ENCODE measurements at regions of chr5 and their contacts with region 1.

Region 1: DNA sequence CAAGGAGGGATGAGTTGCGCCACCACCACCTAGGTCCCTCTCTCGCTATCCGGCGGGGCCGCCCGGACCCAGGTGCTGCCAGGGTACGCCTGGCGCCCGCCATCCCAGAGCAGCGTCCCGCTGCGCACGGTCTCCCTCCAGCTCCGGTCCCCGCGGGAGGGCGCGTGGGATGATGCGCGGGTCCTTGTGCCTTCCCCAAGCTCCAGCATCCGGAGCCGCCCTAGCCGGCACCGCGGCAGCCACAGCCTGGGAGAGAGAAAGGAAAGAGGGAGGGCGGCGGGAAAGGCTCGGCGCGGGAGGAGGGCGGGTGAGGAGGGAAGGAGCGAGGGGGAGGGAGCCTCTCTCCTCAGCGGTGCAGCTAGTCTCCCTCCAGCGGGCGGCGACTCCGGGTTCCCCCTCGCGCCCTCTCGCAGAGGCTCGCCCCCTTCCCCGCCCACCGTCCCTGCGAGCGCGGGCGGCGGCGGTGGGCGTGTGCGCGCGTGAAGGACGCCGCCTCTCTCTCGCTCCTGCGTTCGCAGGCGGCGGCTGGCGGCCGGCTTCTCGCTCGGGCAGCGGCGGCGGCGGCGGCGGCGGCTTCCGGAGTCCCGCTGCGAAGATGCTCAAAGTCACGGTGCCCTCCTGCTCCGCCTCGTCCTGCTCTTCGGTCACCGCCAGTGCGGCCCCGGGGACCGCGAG is at the start of gene CAMK4:
- DNase-seq: peak; percentile 86
- ATAC-seq: peak; percentile 88
- H3K4me3 Mint-ChIP-seq: peak within 1 kb of the TSS; percentile 98
- H3K27ac Mint-ChIP-seq: peak within 1 kb of the TSS; percentile 80
- H3K4me1 Mint-ChIP-seq: peaks cover 23% of the 10 kb centered on the region
- H3K27me3 Mint-ChIP-seq: no peaks in the 10 kb centered on the region
- total RNA-seq, gene CAMK4: 82.7 to 84.9 TPM

Region 2: GRCh38 chr5:111158105-111158744 is 65.8 kb before region 1 on chr5:
- CTCF ChIA-PET with region 1: interaction called, 22 read pairs
- POLR2A ChIA-PET with region 1: no interaction called
- DNase-seq: peak; percentile 86
- ATAC-seq: peak; percentile 72
- H3K4me3 Mint-ChIP-seq: no peak overlapping the region
- H3K27ac Mint-ChIP-seq: no peak overlapping the region
- H3K4me1 Mint-ChIP-seq: peaks cover 2% of the 10 kb centered on the region
- H3K27me3 Mint-ChIP-seq: no peaks in the 10 kb centered on the region

Region 3: DNA sequence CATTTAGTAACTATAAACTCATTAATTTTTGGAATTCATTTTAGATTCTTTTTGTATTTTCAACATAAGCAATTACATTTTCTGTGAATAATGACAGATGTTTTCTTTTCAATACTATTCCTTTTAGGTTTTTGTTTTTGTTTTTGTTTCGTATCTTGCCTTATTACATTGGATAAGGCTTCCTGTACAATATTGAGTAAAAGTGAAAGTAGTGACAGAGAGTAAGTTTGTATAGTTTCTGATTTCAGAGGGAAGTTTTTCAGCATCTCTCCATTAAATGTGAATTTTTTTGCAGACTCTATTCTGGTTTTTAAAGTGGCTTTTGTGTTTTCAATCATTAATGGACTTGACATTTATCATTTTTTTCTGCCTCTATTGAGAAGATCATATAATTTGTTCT is 12.7 kb before region 1 on chr5:
- CTCF ChIA-PET with region 1: interaction called, 11 read pairs
- POLR2A ChIA-PET with region 1: interaction called, 4 read pairs
- DNase-seq: no peak
- ATAC-seq: peak; percentile 65
- H3K4me3 Mint-ChIP-seq: peak overlapping the region; percentile 44
- H3K27ac Mint-ChIP-seq: peak overlapping the region; percentile 8
- H3K4me1 Mint-ChIP-seq: peaks cover 9% of the 10 kb centered on the region
- H3K27me3 Mint-ChIP-seq: no peaks in the 10 kb centered on the region

Region 4: GRCh38 chr5:111237470-111237869 is 13.4 kb after region 1 on chr5:
- CTCF ChIA-PET with region 1: interaction called, 85 read pairs
- POLR2A ChIA-PET with region 1: interaction called, 28 read pairs
- DNase-seq: no peak
- ATAC-seq: peak; percentile 17
- H3K4me3 Mint-ChIP-seq: peak overlapping the region; percentile 72
- H3K27ac Mint-ChIP-seq: peak overlapping the region; percentile 91
- H3K4me1 Mint-ChIP-seq: peaks cover 80% of the 10 kb centered on the region
- H3K27me3 Mint-ChIP-seq: no peaks in the 10 kb centered on the region

Region 5: DNA sequence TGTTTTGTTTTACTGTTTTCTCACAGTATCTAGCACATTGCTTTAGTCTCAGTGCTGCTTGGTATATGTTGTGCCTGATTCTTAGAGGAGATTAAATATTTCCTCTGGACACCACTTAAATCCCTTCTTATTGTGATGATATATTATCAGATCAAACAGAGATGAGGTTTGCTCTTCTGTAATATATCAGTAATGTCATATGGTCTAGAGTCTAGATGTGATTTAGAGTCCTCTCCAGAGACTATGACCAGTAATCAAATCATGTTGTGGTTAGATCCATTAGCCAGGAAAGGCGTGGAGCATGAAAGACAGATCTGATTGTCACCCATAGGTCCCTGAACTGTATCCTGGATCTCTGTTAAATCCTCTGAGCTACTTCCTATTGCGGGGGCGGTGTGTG is 24.5 kb after region 1 on chr5:
- CTCF ChIA-PET with region 1: interaction called, 41 read pairs
- POLR2A ChIA-PET with region 1: interaction called, 45 read pairs
- DNase-seq: no peak
- ATAC-seq: no peak
- H3K4me3 Mint-ChIP-seq: no peak overlapping the region
- H3K27ac Mint-ChIP-seq: no peak overlapping the region
- H3K4me1 Mint-ChIP-seq: peaks cover 75% of the 10 kb centered on the region
- H3K27me3 Mint-ChIP-seq: no peaks in the 10 kb centered on the region

Region 6: DNA sequence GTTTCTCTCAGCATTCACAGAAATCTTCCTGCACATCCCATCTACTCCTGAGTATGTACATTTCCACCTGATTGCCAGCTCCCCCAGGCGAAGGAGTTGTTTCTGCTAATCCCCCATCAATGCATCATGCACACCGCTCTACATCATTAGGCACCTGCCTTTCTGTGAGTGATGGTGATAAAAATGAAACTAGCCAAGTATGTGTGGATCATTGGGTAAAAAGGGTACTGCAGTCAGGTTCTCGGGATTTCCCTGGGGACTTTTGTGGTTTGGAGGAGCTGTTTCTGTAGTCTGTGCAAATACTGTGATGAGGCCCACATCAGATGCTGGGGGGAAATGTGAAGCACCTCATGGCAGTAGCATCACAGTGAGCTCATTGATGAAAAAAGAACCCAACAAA is 30.6 kb after region 1 on chr5:
- CTCF ChIA-PET with region 1: interaction called, 41 read pairs
- POLR2A ChIA-PET with region 1: interaction called, 45 read pairs
- DNase-seq: peak; percentile 53
- ATAC-seq: peak; percentile 73
- H3K4me3 Mint-ChIP-seq: peak overlapping the region; percentile 36
- H3K27ac Mint-ChIP-seq: peak overlapping the region; percentile 76
- H3K4me1 Mint-ChIP-seq: peaks cover 66% of the 10 kb centered on the region
- H3K27me3 Mint-ChIP-seq: no peaks in the 10 kb centered on the region

Region 7: DNA sequence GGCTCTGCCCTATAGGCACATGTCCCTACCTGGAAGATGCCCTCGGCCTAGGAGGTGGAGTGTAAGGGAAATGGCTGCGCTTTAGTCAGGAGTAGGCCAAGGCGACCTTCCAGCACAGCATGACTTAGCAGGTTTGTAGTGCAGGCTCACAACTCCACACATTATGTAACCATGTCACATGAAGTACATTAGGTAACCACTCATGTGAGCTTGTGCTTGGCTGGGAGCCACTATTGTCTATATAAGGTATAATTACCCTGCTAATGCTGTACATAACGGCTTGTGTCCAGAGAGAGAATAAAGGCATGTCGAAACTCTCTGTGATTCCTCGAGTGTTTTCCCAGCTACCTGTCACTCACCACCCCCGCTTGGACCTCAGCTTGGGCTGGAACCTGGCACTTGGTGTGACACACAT is 75.0 kb after region 1 on chr5:
- CTCF ChIA-PET with region 1: no interaction called
- POLR2A ChIA-PET with region 1: no interaction called
- DNase-seq: no peak
- ATAC-seq: no peak
- H3K4me3 Mint-ChIP-seq: no peak overlapping the region
- H3K27ac Mint-ChIP-seq: no peak overlapping the region
- H3K4me1 Mint-ChIP-seq: peaks cover 12% of the 10 kb centered on the region
- H3K27me3 Mint-ChIP-seq: no peaks in the 10 kb centered on the region

Region 8: DNA sequence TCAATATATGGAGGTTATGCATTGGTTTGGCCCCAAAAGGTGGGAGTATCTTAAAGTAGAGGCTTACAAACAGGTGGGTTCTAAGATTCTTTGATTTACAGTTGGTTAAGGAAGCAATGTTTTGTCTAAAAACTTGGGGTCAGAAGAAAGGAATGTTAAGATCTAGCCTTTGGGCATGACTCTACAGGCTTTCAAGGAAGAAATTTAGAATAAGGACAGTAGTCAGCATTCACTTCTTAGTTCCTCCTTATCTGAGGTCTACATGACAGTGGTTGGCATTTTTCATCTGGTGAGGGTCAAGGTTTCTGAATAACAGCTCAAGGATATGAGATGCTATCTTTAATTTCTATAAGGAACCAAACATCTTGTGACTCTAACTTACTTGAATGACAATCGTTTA is 123.0 kb after region 1 on chr5:
- CTCF ChIA-PET with region 1: no interaction called
- POLR2A ChIA-PET with region 1: no interaction called
- DNase-seq: no peak
- ATAC-seq: no peak
- H3K4me3 Mint-ChIP-seq: no peak overlapping the region
- H3K27ac Mint-ChIP-seq: no peak overlapping the region
- H3K4me1 Mint-ChIP-seq: no peaks in the 10 kb centered on the region
- H3K27me3 Mint-ChIP-seq: no peaks in the 10 kb centered on the region

Region 9: GRCh38 chr5:111398013-111398412 is 174.0 kb after region 1 on chr5:
- CTCF ChIA-PET with region 1: no interaction called
- POLR2A ChIA-PET with region 1: no interaction called
- DNase-seq: no peak
- ATAC-seq: no peak
- H3K4me3 Mint-ChIP-seq: no peak overlapping the region
- H3K27ac Mint-ChIP-seq: no peak overlapping the region
- H3K4me1 Mint-ChIP-seq: peaks cover 2% of the 10 kb centered on the region
- H3K27me3 Mint-ChIP-seq: no peaks in the 10 kb centered on the region

Region 10: GRCh38 chr5:111411301-111411700 is 187.3 kb after region 1 on chr5:
- CTCF ChIA-PET with region 1: no interaction called
- POLR2A ChIA-PET with region 1: no interaction called
- DNase-seq: no peak
- ATAC-seq: no peak
- H3K4me3 Mint-ChIP-seq: no peak overlapping the region
- H3K27ac Mint-ChIP-seq: no peak overlapping the region
- H3K4me1 Mint-ChIP-seq: no peaks in the 10 kb centered on the region
- H3K27me3 Mint-ChIP-seq: no peaks in the 10 kb centered on the region